ENCODE measurements at regions of chr1 and their contacts with region 1.

Region 1: GRCh38 chr1:109099938-109100773 is 9.6 kb downstream of the TMEM167B start:
- DNase-seq: peak; percentile 84
- ATAC-seq: peak; percentile 94
- H3K4me3 ChIP-seq: peak overlapping the region; percentile 96
- H3K27ac ChIP-seq: peak overlapping the region; percentile 92
- H3K4me1 ChIP-seq: 0 out of 2 replicates have a peak, but pooled peaks cover 3% of the 10 kb centered on the region
- H3K27me3 ChIP-seq: no peaks in the 10 kb centered on the region
- CTCF ChIP-seq: peak; percentile 88 to 90 (median 89)
- EP300 ChIP-seq: peak in 1 of 2 experiments; percentile 6; a peak in 1 of 4 replicates
- POLR2A ChIP-seq: peak; percentile 100
- RAD21 ChIP-seq: peak; percentile 32; the same call in 1 of the 2 replicates

Region 2: GRCh38 chr1:109075531-109076490 is 24.3 kb before region 1 on chr1 and contains the start of gene TAF13:
- CTCF ChIA-PET with region 1: interaction called, 5 read pairs
- POLR2A ChIA-PET with region 1: interaction called, 12 read pairs
- RAD21 ChIA-PET with region 1: interaction called, 6 read pairs
- SMC1A ChIA-PET with region 1: interaction called, 8 read pairs
- in situ Hi-C with region 1: no loop called
- intact Hi-C with region 1: loop called (anchors 1 kb)
- DNase-seq: peak; percentile 75
- ATAC-seq: peak; percentile 100
- H3K4me3 ChIP-seq: peak within 1 kb of the TSS; percentile 79
- H3K27ac ChIP-seq: peak within 1 kb of the TSS; percentile 89
- H3K4me1 ChIP-seq: no peaks in the 10 kb centered on the region; the same call in none of the 2 replicates
- H3K27me3 ChIP-seq: no peaks in the 10 kb centered on the region
- CTCF ChIP-seq: no peak
- EP300 ChIP-seq: peak in 1 of 2 experiments; percentile 47; a peak in 1 of 4 replicates
- POLR2A ChIP-seq: peak; percentile 98
- RAD21 ChIP-seq: no peak
- polyA plus RNA-seq, gene TAF13: 8.1 to 14.9 TPM

Region 3: GRCh38 chr1:109083923-109084322 is 16.2 kb before region 1 on chr1:
- CTCF ChIA-PET with region 1: interaction called, 35 read pairs
- POLR2A ChIA-PET with region 1: interaction called, 11 read pairs
- RAD21 ChIA-PET with region 1: no interaction called
- SMC1A ChIA-PET with region 1: interaction called, 25 read pairs
- in situ Hi-C with region 1: no loop called
- intact Hi-C with region 1: no loop called
- DNase-seq: no peak
- ATAC-seq: peak; percentile 38
- H3K4me3 ChIP-seq: no peak overlapping the region
- H3K27ac ChIP-seq: no peak overlapping the region
- H3K4me1 ChIP-seq: no peaks in the 10 kb centered on the region
- H3K27me3 ChIP-seq: no peaks in the 10 kb centered on the region
- CTCF ChIP-seq: no peak
- EP300 ChIP-seq: no peak
- POLR2A ChIP-seq: no peak
- RAD21 ChIP-seq: no peak

Region 4: DNA sequence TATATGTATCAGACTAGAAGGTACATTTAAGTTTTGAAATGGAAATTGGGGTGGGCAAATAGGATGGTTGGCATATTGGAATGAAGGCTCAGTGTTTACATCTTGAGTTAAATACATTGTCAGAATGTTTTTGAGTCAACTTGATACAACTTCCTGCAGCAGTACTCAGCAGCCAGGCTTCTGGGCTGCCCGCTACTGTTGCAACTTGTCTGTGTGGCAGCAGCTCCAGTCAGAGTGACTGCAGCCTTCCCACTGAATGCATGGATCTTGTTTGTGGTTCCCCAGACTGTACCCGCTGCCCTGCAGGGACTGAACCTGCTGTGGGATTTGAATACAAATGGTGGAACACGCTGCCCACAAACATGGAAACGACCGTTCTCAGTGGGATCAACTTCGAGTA is 88.6 kb after region 1 on chr1:
- CTCF ChIA-PET with region 1: interaction called, 6 read pairs
- POLR2A ChIA-PET with region 1: no interaction called
- RAD21 ChIA-PET with region 1: interaction called, 3 read pairs
- SMC1A ChIA-PET with region 1: interaction called, 5 read pairs
- in situ Hi-C with region 1: no loop called
- intact Hi-C with region 1: loop called (anchors 1 kb)
- DNase-seq: no peak
- ATAC-seq: no peak
- H3K4me3 ChIP-seq: no peak overlapping the region
- H3K27ac ChIP-seq: no peak overlapping the region
- H3K4me1 ChIP-seq: no peaks in the 10 kb centered on the region; the same call in 1 of the 2 replicates
- H3K27me3 ChIP-seq: no peaks in the 10 kb centered on the region; a peak in 1 of 4 replicates
- CTCF ChIP-seq: no peak
- EP300 ChIP-seq: no peak
- POLR2A ChIP-seq: no peak
- RAD21 ChIP-seq: no peak

Region 5: DNA sequence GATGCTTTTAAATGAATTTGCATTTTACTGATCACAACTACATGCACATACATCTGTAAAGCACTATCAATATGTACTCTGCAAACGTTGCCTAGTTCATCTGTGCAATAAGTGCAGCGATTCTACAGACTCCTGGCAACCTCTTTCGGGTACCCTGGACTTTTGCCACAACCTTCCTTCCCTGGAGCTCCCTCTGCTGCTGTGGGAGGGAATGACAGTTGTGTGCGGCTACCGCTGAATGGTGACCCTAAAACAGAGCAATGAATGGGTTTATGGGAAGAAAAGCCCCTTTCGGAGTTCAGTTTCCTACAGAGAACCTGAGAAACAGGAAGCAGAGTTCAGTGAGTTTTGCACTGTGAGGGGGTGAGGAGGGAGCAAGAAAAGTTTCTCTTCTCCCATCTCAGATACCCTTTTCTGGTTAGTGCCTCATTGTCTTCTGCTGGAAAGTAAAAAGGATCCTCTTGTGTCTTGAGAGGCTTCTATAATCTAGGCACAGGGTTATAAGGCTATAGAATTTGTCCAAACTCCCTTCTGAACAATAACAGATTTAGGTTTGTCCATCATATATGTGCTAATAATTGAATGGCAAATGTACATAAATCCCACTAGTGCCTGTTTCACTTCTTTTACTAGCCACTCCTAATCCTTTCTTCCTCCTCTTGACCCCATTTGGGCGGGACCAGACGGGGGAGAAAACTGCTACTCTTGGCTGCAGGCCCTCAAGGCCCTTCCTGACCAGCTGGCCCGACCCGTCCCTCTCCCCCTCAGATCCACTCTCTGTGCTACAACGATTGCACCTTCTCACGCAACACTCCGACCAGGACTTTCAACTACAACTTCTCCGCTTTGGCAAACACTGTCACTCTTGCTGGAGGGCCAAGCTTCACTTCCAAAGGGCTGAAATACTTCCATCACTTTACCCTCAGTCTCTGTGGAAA is 93.8 kb after region 1 on chr1:
- CTCF ChIA-PET with region 1: interaction called, 6 read pairs
- POLR2A ChIA-PET with region 1: no interaction called
- RAD21 ChIA-PET with region 1: interaction called, 3 read pairs
- SMC1A ChIA-PET with region 1: interaction called, 5 read pairs
- in situ Hi-C with region 1: no loop called
- intact Hi-C with region 1: loop called (anchors 1 kb)
- DNase-seq: peak; percentile 37
- ATAC-seq: peak; percentile 89
- H3K4me3 ChIP-seq: no peak overlapping the region
- H3K27ac ChIP-seq: no peak overlapping the region
- H3K4me1 ChIP-seq: no peaks in the 10 kb centered on the region; the same call in 1 of the 2 replicates
- H3K27me3 ChIP-seq: no peaks in the 10 kb centered on the region
- CTCF ChIP-seq: peak; percentile 82 to 90 (median 87)
- EP300 ChIP-seq: no peak
- POLR2A ChIP-seq: no peak
- RAD21 ChIP-seq: peak; percentile 79

Measured in GM12878 (cell line).